HepG2 (cell line): ENCODE measurements at regions of chr2 and their contacts with region 1.

Region 1: GRCh38 chr2:37414470-37414949 is 70.1 kb downstream of the QPCT start:
- DNase-seq: peak; percentile 39
- ATAC-seq: peak; percentile 87
- H3K4me3 ChIP-seq: no peak overlapping the region
- H3K27ac ChIP-seq: no peak overlapping the region
- H3K4me1 ChIP-seq: no peaks in the 10 kb centered on the region
- H3K27me3 ChIP-seq: peaks cover 0 to 10% of the 10 kb centered on the region in 2 experiments; a peak in 3 of 5 replicates
- CTCF ChIP-seq: peak; percentile 72
- EP300 ChIP-seq: no peak
- POLR2A ChIP-seq: no peak
- RAD21 ChIP-seq: peak; percentile 72

Region 2: GRCh38 chr2:37809525-37809924 is 395.0 kb after region 1 on chr2:
- CTCF ChIA-PET with region 1: no interaction called
- POLR2A ChIA-PET with region 1: no interaction called
- in situ Hi-C with region 1: no loop called
- intact Hi-C with region 1: loop called (anchors 1 kb)
- DNase-seq: no peak
- ATAC-seq: no peak
- H3K4me3 ChIP-seq: no peak overlapping the region
- H3K27ac ChIP-seq: no peak overlapping the region
- H3K4me1 ChIP-seq: no peaks in the 10 kb centered on the region
- H3K27me3 ChIP-seq: peaks cover 0 to 9% of the 10 kb centered on the region in 2 experiments; a peak in 1 of 5 replicates
- CTCF ChIP-seq: no peak
- EP300 ChIP-seq: no peak
- POLR2A ChIP-seq: no peak
- RAD21 ChIP-seq: no peak